ENCODE measurements at regions of chr1 and their contacts with region 1.

Region 1: GRCh38 chr1:119675349-119676345 is 27.6 kb upstream of the ZNF697 start:
- DNase-seq: no peak
- H3K4me3 ChIP-seq: peak overlapping the region; percentile 37
- H3K27me3 ChIP-seq: peaks cover 1% of the 10 kb centered on the region
- CTCF ChIP-seq: peak; percentile 82

Region 2: GRCh38 chr1:119582801-119583200 is 92.8 kb before region 1 on chr1:
- CTCF ChIA-PET with region 1: interaction called, 23 read pairs
- POLR2A ChIA-PET with region 1: no interaction called
- DNase-seq: no peak
- H3K4me3 ChIP-seq: no peak overlapping the region
- H3K27me3 ChIP-seq: peaks cover 1% of the 10 kb centered on the region
- CTCF ChIP-seq: peak; percentile 72

Region 3: GRCh38 chr1:119647734-119648619 is 27.7 kb before region 1 on chr1 and contains the start of gene ZNF697:
- CTCF ChIA-PET with region 1: interaction called, 25 read pairs
- POLR2A ChIA-PET with region 1: no interaction called
- DNase-seq: peak; percentile 90
- H3K4me3 ChIP-seq: peak within 1 kb of the TSS; percentile 85
- H3K27me3 ChIP-seq: no peaks in the 10 kb centered on the region
- CTCF ChIP-seq: peak; percentile 51; the same call in 1 of the 2 replicates
- polyA plus RNA-seq, gene ZNF697: 3.2 and 5.7 TPM in 2 replicates

Region 4: GRCh38 chr1:119662034-119662437 is 13.6 kb before region 1 on chr1:
- CTCF ChIA-PET with region 1: interaction called, 100 read pairs
- POLR2A ChIA-PET with region 1: no interaction called
- DNase-seq: no peak
- H3K4me3 ChIP-seq: no peak overlapping the region
- H3K27me3 ChIP-seq: no peaks in the 10 kb centered on the region
- CTCF ChIP-seq: no peak

Region 5: DNA sequence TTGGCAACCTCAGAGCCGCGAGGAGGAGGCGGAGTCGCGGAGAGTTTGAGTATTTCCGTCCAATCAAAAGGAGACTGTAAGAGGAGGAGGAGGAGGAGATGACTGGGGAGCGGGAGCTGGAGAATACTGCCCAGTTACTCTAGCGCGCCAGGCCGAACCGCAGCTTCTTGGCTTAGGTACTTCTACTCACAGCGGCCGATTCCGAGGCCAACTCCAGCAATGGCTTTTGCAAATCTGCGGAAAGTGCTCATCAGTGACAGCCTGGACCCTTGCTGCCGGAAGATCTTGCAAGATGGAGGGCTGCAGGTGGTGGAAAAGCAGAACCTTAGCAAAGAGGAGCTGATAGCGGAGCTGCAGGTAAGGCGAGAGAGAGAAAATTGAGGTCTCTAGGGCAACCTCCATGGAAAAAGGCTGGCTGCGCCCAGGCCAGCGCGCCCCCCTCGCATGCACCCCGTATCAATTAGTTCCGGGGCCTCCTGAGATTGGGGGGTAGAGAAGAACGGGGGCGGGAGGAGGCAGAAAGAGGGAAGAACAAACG is 36.2 kb after region 1 on chr1 and contains the start of gene PHGDH:
- CTCF ChIA-PET with region 1: interaction called, 14 read pairs
- POLR2A ChIA-PET with region 1: no interaction called
- DNase-seq: peak; percentile 68
- H3K4me3 ChIP-seq: peak within 1 kb of the TSS; percentile 83
- H3K27me3 ChIP-seq: no peaks in the 10 kb centered on the region; the same call in 1 of the 2 replicates
- CTCF ChIP-seq: no peak
- polyA plus RNA-seq, gene PHGDH: 138 and 287 TPM in 2 replicates

Region 6: GRCh38 chr1:119840745-119841144 is 165.1 kb after region 1 on chr1:
- CTCF ChIA-PET with region 1: no interaction called
- POLR2A ChIA-PET with region 1: no interaction called
- DNase-seq: no peak
- H3K4me3 ChIP-seq: no peak overlapping the region
- H3K27me3 ChIP-seq: peaks cover 11% of the 10 kb centered on the region
- CTCF ChIP-seq: no peak